MCF 10A (cell line): ENCODE measurements at regions of chr15 and their contacts with region 1.

Region 1: DNA sequence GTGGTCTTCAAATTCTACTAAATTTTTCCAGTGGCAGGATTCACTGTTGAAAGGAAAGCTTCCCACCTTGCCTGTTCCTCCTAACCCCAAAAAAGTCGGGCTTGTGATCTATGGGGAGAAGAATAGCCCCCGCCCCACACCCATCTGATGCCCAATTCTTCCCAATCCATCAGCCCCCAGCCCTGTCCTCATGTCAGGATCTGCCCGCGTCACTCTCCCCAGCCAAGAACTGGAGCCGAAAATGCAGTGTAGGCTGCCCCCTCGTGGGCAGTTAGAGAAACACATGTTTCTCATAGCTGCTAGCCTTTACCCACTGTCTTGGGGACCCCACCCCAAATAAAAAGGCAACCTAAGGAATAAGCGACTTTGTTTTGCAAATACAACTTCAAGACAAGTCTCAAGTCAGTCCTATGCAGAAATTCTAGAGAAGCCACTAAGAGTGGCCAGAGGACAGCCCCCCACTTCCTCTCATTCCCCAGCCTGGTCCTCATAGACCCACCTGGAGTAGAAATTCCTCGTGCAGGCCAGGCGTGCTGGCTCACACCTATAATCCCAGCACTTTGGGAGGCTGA is 13.0 kb upstream of the CSK start:
- DNase-seq: peak; percentile 70
- H3K4me3 Mint-ChIP-seq: no peak overlapping the region
- H3K27ac Mint-ChIP-seq: no peak overlapping the region
- H3K4me1 Mint-ChIP-seq: peaks cover 6% of the 10 kb centered on the region
- H3K27me3 Mint-ChIP-seq: no peaks in the 10 kb centered on the region
- CTCF ChIP-seq: peak; percentile 81

Region 2: DNA sequence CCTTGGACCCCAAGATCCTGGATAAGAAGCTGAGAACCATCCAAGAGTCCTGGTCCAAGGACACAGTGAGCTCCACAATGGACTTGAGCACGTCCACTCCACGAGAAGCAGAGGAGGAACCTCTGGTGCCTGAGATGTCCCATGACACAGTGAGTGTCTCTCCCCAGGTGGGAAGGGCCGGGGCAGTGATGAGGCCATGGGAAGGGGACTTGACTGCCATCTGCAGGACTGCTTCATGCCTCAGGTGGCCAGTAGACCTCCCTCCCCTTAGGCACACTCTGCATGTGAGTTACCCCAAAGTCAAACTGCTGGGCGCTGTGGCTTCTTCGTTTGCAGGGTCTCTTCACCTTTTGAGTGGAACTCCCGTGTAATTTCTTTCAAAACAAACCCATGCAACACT is 473.1 kb before region 1 on chr15:
- CTCF ChIA-PET with region 1: no interaction called
- POLR2A ChIA-PET with region 1: no interaction called
- intact Hi-C with region 1: no loop called
- DNase-seq: no peak
- H3K4me3 Mint-ChIP-seq: no peak overlapping the region
- H3K27ac Mint-ChIP-seq: no peak overlapping the region
- H3K4me1 Mint-ChIP-seq: no peaks in the 10 kb centered on the region
- H3K27me3 Mint-ChIP-seq: peaks cover 49% of the 10 kb centered on the region
- CTCF ChIP-seq: no peak

Region 3: DNA sequence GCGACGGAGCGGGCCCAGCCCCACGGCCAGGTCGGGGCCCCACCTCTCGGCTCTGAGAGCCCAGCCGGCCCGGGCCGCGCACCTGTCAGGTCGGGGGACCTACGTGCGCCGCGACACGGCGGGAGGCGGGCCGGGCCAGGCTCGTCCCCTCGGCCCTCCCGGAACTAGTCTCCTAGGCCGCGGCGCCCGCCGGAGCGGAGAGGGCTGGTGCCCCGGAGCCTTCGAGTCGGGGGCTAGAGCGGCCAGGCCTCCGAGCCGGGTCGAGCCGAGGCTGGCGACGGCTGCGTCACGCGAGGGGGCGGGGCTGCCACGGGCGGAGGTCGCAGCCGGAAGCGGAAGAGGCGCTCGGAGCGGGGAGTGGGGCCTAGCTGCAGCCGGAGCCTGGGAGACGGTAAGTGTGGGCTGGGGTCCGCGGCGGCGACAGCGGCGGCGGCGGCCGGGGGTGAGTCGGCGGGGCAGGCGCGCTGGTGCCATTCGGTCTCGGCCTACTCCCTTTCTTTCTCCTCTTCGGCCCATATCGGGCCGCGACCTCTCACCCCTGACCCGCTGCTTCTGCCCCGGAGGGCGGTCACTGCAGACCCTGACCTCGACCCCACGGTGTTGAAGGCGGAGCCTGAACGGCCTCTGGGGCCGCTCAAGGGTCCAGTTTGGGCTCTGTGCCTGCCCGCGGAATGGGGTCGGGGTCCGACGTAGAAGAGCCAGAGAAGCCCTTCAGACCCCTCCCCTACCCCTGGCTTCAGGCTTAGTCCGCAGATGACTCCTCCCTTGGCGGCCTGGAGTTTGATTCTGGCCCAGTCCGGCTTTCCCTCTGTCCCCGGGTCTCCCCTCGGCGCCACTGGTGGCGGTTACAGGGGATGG is 153.1 kb before region 1 on chr15 and contains the start of gene CLK3:
- CTCF ChIA-PET with region 1: interaction called, 27 read pairs
- POLR2A ChIA-PET with region 1: interaction called, 3 read pairs
- intact Hi-C with region 1: no loop called
- DNase-seq: peak; percentile 92
- H3K4me3 Mint-ChIP-seq: peak within 1 kb of the TSS; percentile 84
- H3K27ac Mint-ChIP-seq: peak within 1 kb of the TSS; percentile 95
- H3K4me1 Mint-ChIP-seq: peaks cover 31% of the 10 kb centered on the region
- H3K27me3 Mint-ChIP-seq: peaks cover 7% of the 10 kb centered on the region
- CTCF ChIP-seq: no peak
- total RNA-seq, gene CLK3: 57.8 and 62.8 TPM in 2 replicates

Region 4: GRCh38 chr15:74758736-74759135 is 10.1 kb before region 1 on chr15:
- CTCF ChIA-PET with region 1: interaction called, 10 read pairs
- POLR2A ChIA-PET with region 1: no interaction called
- intact Hi-C with region 1: no loop called
- DNase-seq: no peak
- H3K4me3 Mint-ChIP-seq: no peak overlapping the region
- H3K27ac Mint-ChIP-seq: no peak overlapping the region
- H3K4me1 Mint-ChIP-seq: no peaks in the 10 kb centered on the region
- H3K27me3 Mint-ChIP-seq: no peaks in the 10 kb centered on the region
- CTCF ChIP-seq: no peak

Region 5: GRCh38 chr15:74799856-74800547 is 31.1 kb after region 1 on chr15:
- CTCF ChIA-PET with region 1: interaction called, 57 read pairs
- POLR2A ChIA-PET with region 1: interaction called, 13 read pairs
- intact Hi-C with region 1: loop called (anchors 1 kb)
- DNase-seq: peak; percentile 90
- H3K4me3 Mint-ChIP-seq: no peak overlapping the region
- H3K27ac Mint-ChIP-seq: peak overlapping the region; percentile 83
- H3K4me1 Mint-ChIP-seq: peaks cover 13% of the 10 kb centered on the region
- H3K27me3 Mint-ChIP-seq: no peaks in the 10 kb centered on the region
- CTCF ChIP-seq: peak; percentile 97

Region 6: DNA sequence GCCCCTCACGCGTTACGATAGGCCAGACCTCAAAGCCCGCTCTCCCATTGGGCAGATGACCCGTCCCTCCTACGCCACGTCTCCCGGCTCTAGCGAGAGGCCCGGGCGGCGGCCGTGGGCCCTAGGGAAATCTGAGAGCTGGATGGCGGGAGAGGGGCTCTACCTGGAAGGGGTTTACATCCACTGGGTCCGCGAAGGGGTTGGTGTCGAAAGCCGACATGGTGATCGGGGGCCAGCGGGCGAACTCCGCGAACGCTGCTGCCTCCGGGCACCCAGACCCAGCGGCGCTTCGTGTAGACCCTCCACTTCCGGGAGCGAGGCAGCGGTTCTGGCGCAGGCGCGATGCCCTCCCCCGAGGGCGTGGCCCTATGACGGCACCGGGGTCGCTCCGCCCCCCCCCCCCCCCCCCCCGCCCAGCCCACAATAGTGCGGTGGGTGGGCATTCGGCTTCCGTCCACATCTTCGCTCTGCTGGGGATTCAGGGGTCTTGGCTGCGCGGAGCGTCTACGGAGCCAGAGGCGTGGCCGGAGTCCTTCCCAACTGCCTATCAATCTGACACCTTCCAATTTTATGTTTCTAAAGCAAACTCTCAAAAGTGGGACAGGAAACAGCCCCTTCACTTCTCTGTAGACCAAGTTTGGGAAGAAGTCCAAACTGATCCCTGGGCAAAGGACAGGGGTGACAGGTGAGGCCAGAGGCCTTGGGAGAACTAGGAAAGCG is 104.3 kb after region 1 on chr15 and contains the start of gene SCAMP2:
- CTCF ChIA-PET with region 1: interaction called, 14 read pairs
- POLR2A ChIA-PET with region 1: interaction called, 3 read pairs
- intact Hi-C with region 1: no loop called
- DNase-seq: peak; percentile 95
- H3K4me3 Mint-ChIP-seq: peak within 1 kb of the TSS; percentile 100
- H3K27ac Mint-ChIP-seq: peak within 1 kb of the TSS; percentile 95
- H3K4me1 Mint-ChIP-seq: peaks cover 27% of the 10 kb centered on the region
- H3K27me3 Mint-ChIP-seq: no peaks in the 10 kb centered on the region
- CTCF ChIP-seq: no peak
- total RNA-seq, gene SCAMP2: 64.4 and 67.7 TPM in 2 replicates

Region 7: DNA sequence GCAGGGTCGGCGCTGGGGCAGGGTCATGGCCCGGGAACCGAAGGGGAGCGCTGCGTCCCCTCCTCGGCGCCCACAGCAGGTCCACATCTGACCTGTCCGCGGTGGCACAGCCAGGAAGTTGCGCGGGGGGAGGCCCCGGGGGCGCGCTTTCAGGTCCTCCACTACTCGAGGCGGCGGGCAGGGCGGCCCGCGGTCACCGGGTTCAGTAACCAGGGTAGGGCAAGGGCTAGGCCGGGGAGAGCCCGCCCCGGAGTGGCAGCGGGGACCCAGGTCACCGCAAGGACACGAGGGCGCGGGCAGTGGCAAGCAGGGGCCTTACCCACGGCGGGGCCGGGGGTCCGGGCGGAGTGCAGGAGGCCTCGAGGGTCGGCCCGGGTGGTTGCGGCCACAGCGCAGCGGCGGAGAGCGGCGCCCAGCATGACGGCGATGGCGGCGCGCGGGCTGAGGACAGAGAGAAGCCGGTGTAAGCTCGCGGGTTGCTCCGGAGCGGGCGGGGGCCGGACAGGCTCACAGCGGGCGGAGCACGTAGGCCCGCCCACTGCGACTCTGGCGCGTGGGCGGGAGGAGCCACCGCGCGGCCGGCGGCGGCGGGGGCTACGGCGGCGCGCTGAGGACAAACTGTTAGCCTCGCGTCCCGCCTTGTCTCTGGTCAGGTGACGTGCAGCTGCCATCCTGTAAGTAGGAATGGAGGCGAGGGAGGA is 168.9 kb after region 1 on chr15 and contains the start of gene COX5A:
- CTCF ChIA-PET with region 1: interaction called, 16 read pairs
- POLR2A ChIA-PET with region 1: no interaction called
- intact Hi-C with region 1: no loop called
- DNase-seq: peak; percentile 95
- H3K4me3 Mint-ChIP-seq: peak within 1 kb of the TSS; percentile 86
- H3K27ac Mint-ChIP-seq: peak within 1 kb of the TSS; percentile 88
- H3K4me1 Mint-ChIP-seq: peaks cover 6% of the 10 kb centered on the region
- H3K27me3 Mint-ChIP-seq: no peaks in the 10 kb centered on the region
- CTCF ChIP-seq: no peak
- total RNA-seq, gene COX5A: 295 and 339 TPM in 2 replicates